AG04449 (cell line): ENCODE measurements at regions of chr11 and their contacts with region 1.

Region 1: GRCh38 chr11:125923012-125923579 is 18.8 kb downstream of the DDX25 start:
- DNase-seq: peak; percentile 10
- H3K4me3 ChIP-seq: no peak overlapping the region
- CTCF ChIP-seq: peak; percentile 82

Region 2: GRCh38 chr11:125281831-125282595 is 641.1 kb before region 1 on chr11:
- CTCF ChIA-PET with region 1: no interaction called
- POLR2A ChIA-PET with region 1: no interaction called
- DNase-seq: no peak
- H3K4me3 ChIP-seq: no peak overlapping the region
- CTCF ChIP-seq: no peak

Region 3: GRCh38 chr11:125743681-125744080 is 179.4 kb before region 1 on chr11:
- CTCF ChIA-PET with region 1: no interaction called
- POLR2A ChIA-PET with region 1: no interaction called
- DNase-seq: no peak
- H3K4me3 ChIP-seq: no peak overlapping the region
- CTCF ChIP-seq: no peak

Region 4: GRCh38 chr11:125902927-125903710 is 20.0 kb before region 1 on chr11 and contains the start of gene PUS3:
- CTCF ChIA-PET with region 1: interaction called, 10 read pairs
- POLR2A ChIA-PET with region 1: no interaction called
- DNase-seq: no peak
- H3K4me3 ChIP-seq: peak within 1 kb of the TSS; percentile 66
- CTCF ChIP-seq: no peak

Region 5: GRCh38 chr11:125910226-125910849 is 12.8 kb before region 1 on chr11:
- CTCF ChIA-PET with region 1: interaction called, 15 read pairs
- POLR2A ChIA-PET with region 1: no interaction called
- DNase-seq: no peak
- H3K4me3 ChIP-seq: no peak overlapping the region
- CTCF ChIP-seq: no peak

Region 6: DNA sequence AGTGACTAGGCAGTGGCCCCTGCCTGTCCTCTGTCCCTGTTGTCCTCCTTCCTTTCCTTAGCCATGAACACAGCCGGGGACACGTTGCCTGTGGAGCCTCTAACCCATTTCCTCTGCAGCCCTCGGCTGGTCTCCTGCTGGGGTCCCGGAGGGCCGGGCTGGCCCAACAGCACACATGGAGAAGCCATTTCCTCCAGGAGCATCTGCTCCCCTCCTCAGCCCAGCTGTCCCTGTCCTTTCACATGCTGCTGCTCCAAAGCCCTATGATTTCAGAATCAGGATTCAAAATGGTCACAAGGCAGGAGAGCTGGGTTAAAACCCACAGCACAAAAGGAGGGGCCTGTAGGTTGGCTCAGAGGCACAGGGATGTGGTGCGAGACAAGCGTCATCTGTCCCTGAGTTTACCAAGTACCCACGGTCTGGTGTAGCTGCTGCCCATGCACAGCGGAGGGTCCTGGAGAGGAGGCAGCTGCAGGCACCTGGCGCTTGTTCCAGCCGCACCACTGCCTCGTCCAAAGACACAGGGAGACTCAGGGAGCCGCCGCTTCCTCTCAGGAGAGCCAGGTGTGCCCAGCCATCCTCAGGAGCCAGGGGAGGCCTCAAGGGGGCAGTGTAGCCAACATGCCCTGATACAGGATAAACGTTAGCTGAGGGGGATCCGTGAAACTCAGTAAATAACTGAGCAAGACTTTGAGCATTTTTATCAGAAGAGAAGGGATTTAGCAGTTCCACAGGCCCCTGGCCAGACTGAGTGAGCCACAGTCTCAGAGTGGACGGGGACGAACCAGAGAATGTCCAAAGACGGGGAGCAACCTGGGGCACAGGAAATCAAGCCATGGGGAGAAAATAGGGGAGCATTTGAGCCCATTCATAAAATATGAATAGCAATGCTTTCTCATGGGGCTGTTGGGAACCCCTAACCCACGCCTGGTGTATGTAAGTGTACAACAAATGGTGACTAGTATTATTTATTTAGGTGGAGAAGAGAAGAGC is 18.8 kb after region 1 on chr11:
- CTCF ChIA-PET with region 1: interaction called, 49 read pairs
- POLR2A ChIA-PET with region 1: no interaction called
- DNase-seq: no peak
- H3K4me3 ChIP-seq: no peak overlapping the region
- CTCF ChIP-seq: peak; percentile 77

Region 7: DNA sequence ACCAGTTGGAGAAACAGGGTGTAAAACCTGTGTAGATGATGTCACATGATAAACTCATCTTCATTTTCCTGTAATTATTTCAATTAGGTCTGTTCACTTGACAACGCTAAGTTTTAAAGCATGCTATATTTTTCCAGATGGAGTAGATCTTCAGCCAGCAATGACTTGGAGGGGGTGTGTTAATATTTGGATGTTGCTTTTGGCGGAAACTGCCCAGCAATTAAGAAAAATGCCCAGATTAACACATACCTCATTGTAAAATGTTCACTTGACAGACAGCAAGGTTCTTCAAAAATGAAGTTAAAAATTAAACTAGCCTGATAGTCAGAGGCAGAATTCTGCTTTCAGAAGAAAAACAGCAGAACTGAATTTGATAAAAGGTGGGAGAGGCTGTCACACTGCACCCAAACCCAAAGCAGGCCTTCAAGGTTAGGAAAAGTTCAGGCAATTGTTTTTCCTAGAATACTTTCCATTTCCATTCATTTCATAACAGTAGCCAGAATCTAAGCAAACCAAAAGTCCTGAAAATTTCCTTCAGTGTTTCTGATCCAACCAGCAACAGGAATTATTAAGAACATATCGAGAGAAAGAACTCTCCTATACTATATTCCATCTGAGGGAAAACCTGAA is 55.8 kb after region 1 on chr11:
- CTCF ChIA-PET with region 1: no interaction called
- POLR2A ChIA-PET with region 1: no interaction called
- DNase-seq: no peak
- H3K4me3 ChIP-seq: no peak overlapping the region
- CTCF ChIP-seq: no peak